CD8-positive, alpha-beta T cell (primary cell): ENCODE measurements at regions of chr2 and their contacts with region 1.

Region 1: DNA sequence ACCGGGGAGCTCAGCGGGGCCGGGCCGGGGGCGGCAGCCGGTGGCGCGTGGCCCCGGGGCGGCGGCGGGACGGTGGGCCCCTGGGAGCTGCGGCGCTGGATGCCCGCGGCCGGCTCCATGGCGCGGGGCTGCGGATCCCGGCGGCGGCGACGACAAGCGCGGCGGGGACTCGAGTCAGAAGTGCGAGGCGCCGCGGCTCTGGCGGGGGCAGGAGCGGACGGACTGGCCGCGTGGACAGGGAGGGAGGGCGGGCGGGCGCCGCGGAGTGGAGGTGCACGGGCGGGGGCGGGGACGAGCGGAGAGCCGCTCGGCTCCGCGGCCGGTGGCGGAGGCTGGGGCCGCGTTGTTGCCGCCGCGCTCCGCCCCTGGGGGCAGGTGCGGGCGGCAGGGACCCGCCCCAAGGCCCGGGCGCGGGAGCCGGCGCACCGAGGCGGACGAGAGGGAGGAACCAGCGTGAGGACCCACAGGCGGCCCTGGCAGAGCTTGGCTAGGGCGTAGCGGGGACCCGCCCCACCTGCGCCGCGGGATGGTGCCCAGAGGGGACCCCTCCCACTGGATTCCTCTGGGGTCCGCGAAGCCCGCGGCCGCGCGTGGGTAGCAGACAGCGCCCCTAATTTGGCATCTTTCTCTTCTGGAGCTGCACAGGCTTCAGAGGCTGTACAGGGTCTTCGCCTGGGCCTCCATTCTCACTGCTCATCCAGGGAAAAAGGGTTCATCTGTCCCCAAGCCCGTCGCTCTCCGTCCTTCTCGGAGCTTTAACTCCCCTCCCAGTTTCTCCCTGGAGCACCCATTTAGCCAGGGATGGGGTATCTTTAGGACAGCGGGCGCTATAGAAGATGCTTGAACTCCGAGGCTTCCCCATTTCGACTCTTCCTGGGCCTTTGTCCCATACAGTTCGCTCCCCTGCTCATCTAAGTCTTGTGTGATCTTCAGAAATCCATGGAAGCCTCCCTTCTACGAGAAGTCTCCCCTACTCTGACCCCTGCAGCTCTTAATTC is at the start of gene TMEM163:
- DNase-seq: peak in 6 of 9 experiments; percentile 13 to 63 (median 46)
- ATAC-seq: peak; percentile 68
- H3K4me3 ChIP-seq: peak within 1 kb of the TSS; percentile 34 to 39
- H3K4me3 Mint-ChIP-seq: peak within 1 kb of the TSS; percentile 78
- H3K27ac ChIP-seq: no peak within 1 kb of the TSS
- H3K27ac Mint-ChIP-seq: no peak within 1 kb of the TSS
- H3K4me1 ChIP-seq: peaks cover 7% of the 10 kb centered on the region
- H3K4me1 Mint-ChIP-seq: peaks cover 15% of the 10 kb centered on the region
- H3K27me3 ChIP-seq: peaks cover 11 to 17% of the 10 kb centered on the region in 2 experiments
- H3K27me3 Mint-ChIP-seq: peaks cover 66% of the 10 kb centered on the region
- CTCF ChIP-seq: no peak
- total RNA-seq, gene TMEM163: 0.14 to 0.19 TPM

Region 2: GRCh38 chr2:134636714-134637113 is 82.4 kb before region 1 on chr2:
- CTCF ChIA-PET with region 1: no interaction called
- POLR2A ChIA-PET with region 1: no interaction called
- intact Hi-C with region 1: loop called in 1 of 2 experiments (anchors 5 kb)
- DNase-seq: no peak
- ATAC-seq: no peak
- H3K4me3 ChIP-seq: no peak overlapping the region
- H3K4me3 Mint-ChIP-seq: no peak overlapping the region
- H3K27ac ChIP-seq: no peak overlapping the region
- H3K27ac Mint-ChIP-seq: no peak overlapping the region
- H3K4me1 ChIP-seq: no peaks in the 10 kb centered on the region
- H3K4me1 Mint-ChIP-seq: peaks cover 4% of the 10 kb centered on the region
- H3K27me3 ChIP-seq: peaks cover 0 to 2% of the 10 kb centered on the region in 2 experiments
- H3K27me3 Mint-ChIP-seq: peaks cover 7% of the 10 kb centered on the region
- CTCF ChIP-seq: no peak

Region 3: DNA sequence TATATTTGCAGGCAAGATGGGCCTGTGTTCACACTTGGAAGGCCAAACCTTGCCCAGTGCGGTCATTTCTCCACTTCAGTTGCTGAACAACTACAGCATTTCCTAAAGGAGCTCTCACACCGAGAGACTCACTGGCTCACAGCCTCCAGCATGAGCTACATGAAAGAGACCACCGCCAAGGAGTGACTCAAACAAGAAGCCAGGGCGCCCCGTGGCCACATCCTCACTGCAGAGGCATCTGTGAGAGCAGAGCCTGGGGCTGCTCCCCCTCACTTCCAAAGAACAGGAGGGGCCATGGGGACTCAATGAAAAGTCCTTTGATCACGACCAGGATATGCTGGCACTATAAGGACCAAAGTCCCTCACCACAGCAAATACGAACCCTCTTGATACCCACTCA is 50.3 kb before region 1 on chr2:
- CTCF ChIA-PET with region 1: no interaction called
- POLR2A ChIA-PET with region 1: no interaction called
- intact Hi-C with region 1: loop called in 1 of 2 experiments (anchors 10 kb)
- DNase-seq: peak; percentile 50 to 95 (median 78)
- ATAC-seq: peak; percentile 73
- H3K4me3 ChIP-seq: peak overlapping the region; percentile 0 to 10
- H3K4me3 Mint-ChIP-seq: peak overlapping the region; percentile 42
- H3K27ac ChIP-seq: peak overlapping the region in 1 of 2 experiments; percentile 83
- H3K27ac Mint-ChIP-seq: peak overlapping the region; percentile 82
- H3K4me1 ChIP-seq: peaks cover 60% of the 10 kb centered on the region
- H3K4me1 Mint-ChIP-seq: peaks cover 82% of the 10 kb centered on the region
- H3K27me3 ChIP-seq: no peaks in the 10 kb centered on the region
- H3K27me3 Mint-ChIP-seq: peaks cover 20% of the 10 kb centered on the region
- CTCF ChIP-seq: no peak

Region 4: DNA sequence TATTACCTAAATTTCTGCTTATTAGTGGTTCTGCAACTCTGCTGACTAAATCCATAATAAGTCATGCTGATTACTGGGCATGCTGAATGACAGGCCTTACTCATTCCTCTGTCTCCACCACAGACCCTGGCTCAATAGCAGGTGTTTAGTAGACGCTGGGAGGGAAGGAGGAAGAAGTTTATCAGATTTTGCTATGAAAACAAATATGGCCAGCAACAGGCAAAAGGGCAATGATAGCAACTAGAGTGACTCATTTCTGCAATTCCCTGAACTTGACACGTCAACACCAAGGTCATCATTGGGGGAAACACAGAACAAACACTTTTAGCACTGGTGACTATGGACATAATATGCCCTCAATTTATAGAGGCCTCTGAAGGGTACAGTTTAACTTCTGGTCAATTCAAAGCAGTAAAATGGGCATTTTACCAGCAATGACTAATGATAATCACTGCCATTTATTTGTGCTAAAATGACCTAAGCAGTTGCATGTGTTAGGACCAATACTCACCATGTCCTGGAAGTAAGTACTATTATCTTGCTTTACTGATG is 35.5 kb before region 1 on chr2:
- CTCF ChIA-PET with region 1: interaction called, 4 read pairs
- POLR2A ChIA-PET with region 1: interaction called, 3 read pairs
- intact Hi-C with region 1: loop called in 1 of 2 experiments (anchors 1 kb)
- DNase-seq: peak in 1 of 9 experiments; percentile 24
- ATAC-seq: no peak
- H3K4me3 ChIP-seq: no peak overlapping the region
- H3K4me3 Mint-ChIP-seq: no peak overlapping the region
- H3K27ac ChIP-seq: no peak overlapping the region
- H3K27ac Mint-ChIP-seq: no peak overlapping the region
- H3K4me1 ChIP-seq: peaks cover 23% of the 10 kb centered on the region
- H3K4me1 Mint-ChIP-seq: peaks cover 27% of the 10 kb centered on the region
- H3K27me3 ChIP-seq: no peaks in the 10 kb centered on the region
- H3K27me3 Mint-ChIP-seq: peaks cover 8% of the 10 kb centered on the region
- CTCF ChIP-seq: no peak